PC-9 (cell line): ENCODE measurements at regions of chr1 and their contacts with region 1.

Region 1: GRCh38 chr1:88180449-88181108 is 503.5 kb upstream of the PKN2 start:
- DNase-seq: peak; percentile 45 to 63
- H3K4me3 ChIP-seq: no peak overlapping the region
- H3K27ac ChIP-seq: no peak overlapping the region
- H3K4me1 ChIP-seq: peaks cover 8% of the 10 kb centered on the region
- H3K27me3 ChIP-seq: no peaks in the 10 kb centered on the region
- CTCF ChIP-seq: peak; percentile 95

Region 2: GRCh38 chr1:87131809-87132283 is 1048.7 kb before region 1 on chr1:
- CTCF ChIA-PET with region 1: no interaction called
- POLR2A ChIA-PET with region 1: no interaction called
- intact Hi-C with region 1: loop called (anchors 5 kb)
- DNase-seq: peak; percentile 55 to 69
- H3K4me3 ChIP-seq: peak overlapping the region; percentile 46; the same call in 1 of the 2 replicates
- H3K27ac ChIP-seq: no peak overlapping the region
- H3K4me1 ChIP-seq: 0 out of 2 replicates have a peak, but pooled peaks cover 12% of the 10 kb centered on the region
- H3K27me3 ChIP-seq: no peaks in the 10 kb centered on the region
- CTCF ChIP-seq: peak; percentile 97

Region 3: GRCh38 chr1:87334351-87335174 is 846.0 kb before region 1 on chr1:
- CTCF ChIA-PET with region 1: interaction called, 11 read pairs
- POLR2A ChIA-PET with region 1: no interaction called
- intact Hi-C with region 1: loop called (anchors 5 kb)
- DNase-seq: no peak
- H3K4me3 ChIP-seq: peak overlapping the region; percentile 64
- H3K27ac ChIP-seq: no peak overlapping the region
- H3K4me1 ChIP-seq: peaks cover 41% of the 10 kb centered on the region
- H3K27me3 ChIP-seq: no peaks in the 10 kb centered on the region
- CTCF ChIP-seq: no peak

Region 4: GRCh38 chr1:87794788-87795614 is 385.6 kb before region 1 on chr1:
- CTCF ChIA-PET with region 1: no interaction called
- POLR2A ChIA-PET with region 1: no interaction called
- intact Hi-C with region 1: loop called (anchors 10 kb)
- DNase-seq: peak; percentile 54 to 93
- H3K4me3 ChIP-seq: no peak overlapping the region
- H3K27ac ChIP-seq: peak overlapping the region; percentile 38
- H3K4me1 ChIP-seq: peaks cover 20% of the 10 kb centered on the region
- H3K27me3 ChIP-seq: no peaks in the 10 kb centered on the region
- CTCF ChIP-seq: no peak

Region 5: GRCh38 chr1:87953732-87954344 is 226.7 kb before region 1 on chr1:
- CTCF ChIA-PET with region 1: no interaction called
- POLR2A ChIA-PET with region 1: no interaction called
- intact Hi-C with region 1: no loop called
- DNase-seq: peak; percentile 48 to 59
- H3K4me3 ChIP-seq: no peak overlapping the region
- H3K27ac ChIP-seq: no peak overlapping the region
- H3K4me1 ChIP-seq: no peaks in the 10 kb centered on the region
- H3K27me3 ChIP-seq: no peaks in the 10 kb centered on the region
- CTCF ChIP-seq: peak; percentile 93

Region 6: GRCh38 chr1:88549536-88549935 is 369.0 kb after region 1 on chr1:
- CTCF ChIA-PET with region 1: interaction called, 3 read pairs
- POLR2A ChIA-PET with region 1: interaction called, 4 read pairs
- intact Hi-C with region 1: loop called (anchors 5 kb)
- DNase-seq: no peak
- H3K4me3 ChIP-seq: no peak overlapping the region
- H3K27ac ChIP-seq: no peak overlapping the region
- H3K4me1 ChIP-seq: no peaks in the 10 kb centered on the region
- H3K27me3 ChIP-seq: no peaks in the 10 kb centered on the region
- CTCF ChIP-seq: peak; percentile 63

Region 7: GRCh38 chr1:88877382-88877825 is 696.8 kb after region 1 on chr1:
- CTCF ChIA-PET with region 1: no interaction called
- POLR2A ChIA-PET with region 1: no interaction called
- intact Hi-C with region 1: loop called (anchors 10 kb)
- DNase-seq: peak in 1 of 2 experiments; percentile 53
- H3K4me3 ChIP-seq: no peak overlapping the region
- H3K27ac ChIP-seq: 0 out of 2 replicates have a peak overlapping the region, but pooled peaks have one; percentile 3
- H3K4me1 ChIP-seq: peaks cover 5% of the 10 kb centered on the region; the same call in 1 of the 2 replicates
- H3K27me3 ChIP-seq: no peaks in the 10 kb centered on the region
- CTCF ChIP-seq: peak; percentile 94